Activated CD4-positive, alpha-beta memory T cell treated with anti-CD3 and anti-CD28 coated beads for 36 hours (primary cell): ENCODE measurements at regions of chr10 and their contacts with region 1.

Region 1: DNA sequence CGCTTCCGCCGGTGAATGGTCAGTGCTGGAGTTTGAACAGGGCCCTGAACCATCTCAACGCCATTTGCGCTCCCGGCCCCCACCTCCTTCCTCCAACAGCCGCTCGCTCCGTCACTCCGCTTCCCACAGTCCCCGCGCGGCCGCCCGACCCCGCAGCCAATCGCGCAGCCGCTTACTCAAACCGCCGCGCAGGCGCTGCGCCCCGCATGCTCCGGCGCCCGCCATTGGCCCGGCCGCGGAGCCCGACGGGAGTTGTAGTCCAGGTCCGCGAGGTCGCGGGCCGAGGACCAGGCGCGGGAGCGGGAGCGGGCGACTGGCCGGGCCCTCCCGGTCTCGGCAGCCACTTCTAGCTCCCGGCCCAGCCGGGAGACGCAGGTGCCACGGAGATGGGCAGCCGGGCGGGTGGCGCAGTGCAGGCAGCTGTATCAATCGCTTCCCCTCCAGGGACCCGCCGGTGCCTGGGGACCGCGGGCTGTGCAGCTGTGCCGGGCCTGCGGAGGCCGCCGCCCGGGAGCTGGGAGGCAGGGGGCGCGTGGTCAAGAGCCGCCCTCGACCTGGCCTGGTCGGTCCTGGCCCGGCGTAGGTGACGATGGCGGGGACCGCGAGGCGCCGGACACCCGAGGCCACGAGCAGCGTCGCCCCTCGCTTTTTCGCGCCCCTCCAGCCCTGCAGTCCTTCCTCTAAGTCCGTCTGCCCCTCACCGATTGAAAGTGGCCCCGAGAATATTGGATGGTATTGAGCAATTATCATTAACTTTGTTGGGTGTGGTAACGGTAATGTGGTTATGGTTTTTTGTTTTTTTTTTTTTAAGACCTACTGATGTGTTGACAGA is at the start of gene WAPL:
- DNase-seq: peak; percentile 96
- H3K4me3 Mint-ChIP-seq: peak within 1 kb of the TSS; percentile 86
- H3K27ac Mint-ChIP-seq: peak within 1 kb of the TSS; percentile 86
- H3K4me1 Mint-ChIP-seq: peaks cover 58% of the 10 kb centered on the region
- H3K27me3 Mint-ChIP-seq: no peaks in the 10 kb centered on the region
- total RNA-seq, gene WAPL: 43.6 to 44.6 TPM

Region 2: DNA sequence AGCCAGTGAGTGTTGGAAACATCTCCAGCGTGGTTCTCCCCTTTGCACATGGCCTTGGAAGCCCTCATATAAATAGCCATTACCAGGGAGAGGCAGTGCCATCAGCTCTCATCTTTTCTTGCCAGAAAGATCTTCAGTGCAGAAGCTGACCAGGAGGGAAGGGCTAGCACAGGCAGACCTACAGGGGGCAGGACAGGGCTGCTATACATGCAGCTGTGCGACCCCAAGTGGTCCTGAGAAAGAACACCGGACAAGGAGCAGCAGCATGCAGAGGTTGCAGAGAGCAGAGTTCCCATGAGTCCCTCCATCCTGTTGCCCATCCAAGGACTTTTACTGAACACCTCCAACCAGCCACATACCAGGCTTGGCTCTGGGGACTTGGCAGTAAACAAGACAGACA is 172.4 kb before region 1 on chr10:
- CTCF ChIA-PET with region 1: no interaction called
- POLR2A ChIA-PET with region 1: no interaction called
- intact Hi-C with region 1: no loop called
- DNase-seq: no peak
- H3K4me3 Mint-ChIP-seq: no peak overlapping the region
- H3K27ac Mint-ChIP-seq: no peak overlapping the region
- H3K4me1 Mint-ChIP-seq: no peaks in the 10 kb centered on the region
- H3K27me3 Mint-ChIP-seq: peaks cover 3% of the 10 kb centered on the region

Region 3: GRCh38 chr10:86411281-86411841 is 110.5 kb before region 1 on chr10:
- CTCF ChIA-PET with region 1: no interaction called
- POLR2A ChIA-PET with region 1: no interaction called
- intact Hi-C with region 1: loop called (anchors 1 kb)
- DNase-seq: peak; percentile 66
- H3K4me3 Mint-ChIP-seq: peak overlapping the region; percentile 40
- H3K27ac Mint-ChIP-seq: peak overlapping the region; percentile 91
- H3K4me1 Mint-ChIP-seq: peaks cover 41% of the 10 kb centered on the region
- H3K27me3 Mint-ChIP-seq: no peaks in the 10 kb centered on the region

Region 4: DNA sequence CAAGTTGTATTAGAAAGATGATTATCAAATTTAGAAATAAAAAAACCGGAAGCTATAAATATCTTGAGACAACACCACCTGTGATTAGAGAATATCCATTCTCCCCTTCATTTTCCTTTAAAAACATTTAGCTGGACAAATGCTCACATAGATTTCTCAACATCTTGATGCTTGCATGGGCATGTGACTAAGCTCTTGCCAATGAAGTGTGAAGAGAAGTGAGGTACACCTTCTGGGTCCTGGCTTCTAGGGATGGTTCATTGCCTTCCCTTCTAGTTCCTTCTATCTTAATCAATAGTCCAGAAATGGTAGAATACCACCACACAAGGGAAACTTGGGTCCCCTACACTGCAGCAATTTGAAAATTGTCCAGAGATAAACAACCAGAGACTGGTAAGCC is 41.3 kb before region 1 on chr10:
- CTCF ChIA-PET with region 1: no interaction called
- POLR2A ChIA-PET with region 1: no interaction called
- intact Hi-C with region 1: no loop called
- DNase-seq: no peak
- H3K4me3 Mint-ChIP-seq: no peak overlapping the region
- H3K27ac Mint-ChIP-seq: no peak overlapping the region
- H3K4me1 Mint-ChIP-seq: peaks cover 2% of the 10 kb centered on the region
- H3K27me3 Mint-ChIP-seq: no peaks in the 10 kb centered on the region

Region 5: DNA sequence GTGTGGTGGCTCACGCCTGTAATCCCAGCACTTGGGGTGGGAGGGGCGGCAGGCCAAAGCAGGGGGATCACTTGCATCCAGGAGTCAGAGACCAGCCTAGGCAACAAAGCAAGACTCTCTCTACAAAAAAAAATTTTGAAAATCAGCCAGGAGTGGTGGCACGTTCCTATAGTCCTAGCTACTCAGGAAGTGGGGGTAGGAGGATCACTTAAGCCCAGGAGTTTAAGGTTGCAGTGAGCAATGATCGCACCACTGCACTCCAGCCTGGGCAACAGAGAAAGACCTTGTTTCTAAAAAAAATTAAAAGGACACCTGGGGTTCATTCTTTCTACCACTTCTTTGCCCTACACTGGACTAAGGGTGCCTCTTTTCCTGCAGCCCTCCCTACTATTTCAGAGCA is 15.4 kb before region 1 on chr10:
- CTCF ChIA-PET with region 1: no interaction called
- POLR2A ChIA-PET with region 1: no interaction called
- intact Hi-C with region 1: no loop called
- DNase-seq: no peak
- H3K4me3 Mint-ChIP-seq: no peak overlapping the region
- H3K27ac Mint-ChIP-seq: no peak overlapping the region
- H3K4me1 Mint-ChIP-seq: peaks cover 28% of the 10 kb centered on the region
- H3K27me3 Mint-ChIP-seq: no peaks in the 10 kb centered on the region

Region 6: GRCh38 chr10:86535057-86535882 is 13.4 kb after region 1 on chr10:
- CTCF ChIA-PET with region 1: interaction called, 3 read pairs
- POLR2A ChIA-PET with region 1: interaction called, 5 read pairs
- intact Hi-C with region 1: loop called (anchors 2 kb)
- DNase-seq: peak; percentile 65
- H3K4me3 Mint-ChIP-seq: peak overlapping the region; percentile 65
- H3K27ac Mint-ChIP-seq: peak overlapping the region; percentile 72
- H3K4me1 Mint-ChIP-seq: peaks cover 17% of the 10 kb centered on the region
- H3K27me3 Mint-ChIP-seq: no peaks in the 10 kb centered on the region

Region 7: GRCh38 chr10:86585037-86585725 is 63.3 kb after region 1 on chr10:
- CTCF ChIA-PET with region 1: interaction called, 8 read pairs
- POLR2A ChIA-PET with region 1: no interaction called
- intact Hi-C with region 1: loop called (anchors 2 kb)
- DNase-seq: peak; percentile 82
- H3K4me3 Mint-ChIP-seq: no peak overlapping the region
- H3K27ac Mint-ChIP-seq: no peak overlapping the region
- H3K4me1 Mint-ChIP-seq: peaks cover 2% of the 10 kb centered on the region
- H3K27me3 Mint-ChIP-seq: no peaks in the 10 kb centered on the region

Region 8: DNA sequence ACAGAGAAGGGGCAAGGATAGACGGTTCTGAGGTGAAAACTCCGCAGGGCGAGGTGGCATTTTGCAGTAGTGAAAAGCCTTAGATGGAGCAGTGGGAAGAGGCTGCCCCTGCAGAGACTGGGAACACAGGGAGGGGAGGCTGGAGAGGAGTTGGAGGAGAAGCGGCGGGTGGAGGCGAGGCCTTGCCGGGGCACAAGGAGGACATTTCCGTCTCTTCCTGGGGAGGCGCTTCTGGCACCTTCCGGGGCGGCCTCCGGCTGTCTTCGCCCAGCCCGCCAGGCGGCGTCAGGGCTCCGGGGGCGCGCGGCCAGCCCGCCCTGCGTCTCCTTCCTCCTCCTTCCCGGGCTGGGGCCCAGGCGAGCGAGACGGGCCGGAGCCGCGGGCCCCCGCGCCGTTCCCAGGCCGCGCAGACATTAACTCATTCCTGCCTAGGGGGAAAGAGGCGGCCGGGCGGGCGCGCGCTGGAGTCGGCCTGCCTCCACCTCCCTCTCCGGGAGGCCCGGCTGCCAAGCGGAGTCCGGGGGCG is 189.2 kb after region 1 on chr10:
- CTCF ChIA-PET with region 1: no interaction called
- POLR2A ChIA-PET with region 1: no interaction called
- intact Hi-C with region 1: loop called (anchors 5 kb)
- DNase-seq: peak; percentile 89
- H3K4me3 Mint-ChIP-seq: peak overlapping the region; percentile 75
- H3K27ac Mint-ChIP-seq: peak overlapping the region; percentile 89
- H3K4me1 Mint-ChIP-seq: peaks cover 11% of the 10 kb centered on the region
- H3K27me3 Mint-ChIP-seq: no peaks in the 10 kb centered on the region